Right ventricle myocardium inferior (tissue), 1 donor: ENCODE measurements at regions of chr13 and their contacts with region 1.

Region 1: GRCh38 chr13:112689303-112690165 is at the start of gene ATP11A:
- DNase-seq: peak; percentile 96
- ATAC-seq: peak; percentile 94
- total RNA-seq, gene ATP11A: 89.9 TPM

Region 2: DNA sequence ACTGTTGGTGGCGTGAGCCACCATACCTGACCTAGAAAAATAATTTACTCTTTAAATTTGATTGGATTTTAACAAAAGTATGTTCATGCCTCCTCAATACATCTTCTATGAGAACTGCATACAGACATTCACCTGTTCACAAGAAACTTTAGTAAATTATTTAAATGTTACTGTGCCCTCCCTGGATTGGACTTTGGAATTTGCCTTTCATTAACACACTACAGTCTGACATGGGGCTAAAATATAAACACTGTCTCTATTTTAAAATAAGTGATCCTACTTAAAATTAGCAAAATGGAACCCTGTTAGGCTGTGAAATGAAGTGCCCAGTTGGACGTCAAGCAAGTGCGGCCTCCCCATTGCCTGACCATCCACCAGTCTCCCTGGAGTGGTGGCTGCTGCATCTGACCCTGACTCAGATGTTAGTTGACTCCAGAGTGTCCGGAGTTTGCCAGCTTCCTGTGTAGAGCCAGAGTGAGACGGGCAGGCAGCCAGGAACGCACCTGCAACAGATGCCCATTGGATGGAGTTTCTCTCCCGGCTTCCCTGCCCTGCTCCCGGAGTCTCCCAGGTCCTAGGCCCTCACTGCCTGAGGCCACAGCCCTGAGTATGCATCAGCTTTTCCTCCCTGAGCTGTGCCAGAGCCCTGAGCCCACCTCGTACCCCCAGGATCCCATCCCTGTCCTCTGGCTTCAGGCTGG is 45.6 kb before region 1 on chr13:
- intact Hi-C with region 1: loop called (anchors 5 kb)
- DNase-seq: no peak
- ATAC-seq: no peak

Region 3: DNA sequence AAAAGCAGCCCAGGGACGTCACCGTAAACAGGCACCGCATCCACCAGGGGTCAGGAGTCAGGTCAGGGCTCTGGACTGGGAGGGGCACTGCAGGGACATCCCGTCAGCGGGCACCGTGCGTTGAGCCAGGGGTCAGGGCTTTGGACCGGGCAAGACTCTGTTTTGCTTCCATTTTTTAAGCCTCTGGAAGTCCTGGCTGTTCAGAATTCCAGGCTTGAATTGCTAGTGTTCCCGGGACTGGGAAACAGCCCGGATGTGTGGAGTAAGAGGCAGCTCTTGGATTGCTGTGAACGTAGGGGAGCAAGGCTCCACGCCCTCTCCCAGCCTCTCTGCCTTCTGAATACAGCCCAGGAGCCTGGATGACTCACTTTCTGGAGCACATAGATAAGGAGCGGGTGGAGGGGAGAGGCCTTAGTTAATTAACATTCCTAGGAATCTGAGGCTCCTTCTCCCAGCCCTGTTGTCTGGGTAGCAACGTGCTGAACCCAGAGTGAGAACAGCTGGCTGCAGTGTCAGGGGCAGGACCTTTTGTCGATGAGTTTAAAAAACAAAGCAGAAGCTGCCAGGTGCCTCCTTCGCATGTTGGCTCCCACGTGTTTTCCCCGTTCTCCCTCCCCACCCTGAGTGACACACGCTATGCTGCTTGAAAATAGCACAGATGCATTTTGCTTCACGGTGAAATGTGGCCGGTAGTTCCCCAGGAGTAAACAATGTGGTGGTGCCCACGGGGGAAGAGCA is 22.2 kb after region 1 on chr13:
- intact Hi-C with region 1: loop called (anchors 1 kb)
- DNase-seq: peak; percentile 88
- ATAC-seq: peak; percentile 97

Region 4: DNA sequence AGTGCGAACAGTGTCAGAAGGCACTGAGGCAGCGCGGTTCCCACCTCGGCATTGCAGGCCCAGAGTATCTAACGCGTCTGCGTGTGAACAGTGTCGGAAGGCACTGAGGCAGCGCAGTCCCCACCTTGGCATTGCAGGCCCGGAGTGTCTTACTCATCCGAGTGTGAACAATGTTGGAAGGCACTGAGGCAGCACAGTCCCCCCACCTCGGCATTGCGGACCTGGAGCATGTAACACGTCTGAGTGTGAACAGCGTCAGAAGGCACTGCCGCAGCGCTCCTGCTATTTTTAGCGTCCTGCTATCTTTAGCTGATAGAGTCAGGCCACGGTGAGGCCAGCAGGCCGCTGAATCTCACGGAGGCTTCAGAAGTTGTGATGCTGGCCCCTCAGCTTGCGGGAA is 39.9 kb after region 1 on chr13:
- intact Hi-C with region 1: loop called (anchors 2 kb)
- DNase-seq: no peak
- ATAC-seq: peak; percentile 87

Region 5: DNA sequence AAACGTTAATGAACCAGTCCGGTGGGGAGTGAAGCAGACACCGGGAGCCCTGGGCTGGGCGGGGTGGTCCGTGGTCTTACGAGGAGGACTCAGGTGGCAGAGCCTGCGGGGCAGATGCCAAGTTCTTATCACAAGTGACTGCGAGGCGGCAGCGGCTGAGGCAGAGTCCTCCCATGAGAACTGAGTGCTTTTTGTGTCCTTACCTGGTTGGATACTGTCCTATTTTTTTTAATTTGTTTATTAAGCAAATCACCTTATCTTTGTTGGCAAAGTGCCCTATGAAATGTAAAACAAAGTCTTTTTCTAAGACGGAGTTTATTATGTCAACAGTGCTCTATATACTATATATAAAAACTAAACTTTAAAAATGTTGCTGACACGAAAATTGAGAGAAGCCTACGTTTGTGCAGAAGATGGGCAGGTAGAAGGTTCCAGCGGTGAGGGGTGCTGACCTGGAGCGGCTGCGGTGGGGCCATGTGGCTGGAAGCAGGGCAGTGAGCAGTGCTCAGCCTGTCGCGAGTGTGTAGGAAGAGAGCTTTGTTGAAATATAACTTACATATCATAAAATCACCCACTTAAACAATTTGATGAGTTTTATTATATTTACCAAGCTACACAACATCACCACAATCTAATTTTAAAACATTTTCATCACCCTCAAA is 82.5 kb after region 1 on chr13:
- intact Hi-C with region 1: loop called (anchors 5 kb)
- DNase-seq: no peak
- ATAC-seq: no peak

Region 6: DNA sequence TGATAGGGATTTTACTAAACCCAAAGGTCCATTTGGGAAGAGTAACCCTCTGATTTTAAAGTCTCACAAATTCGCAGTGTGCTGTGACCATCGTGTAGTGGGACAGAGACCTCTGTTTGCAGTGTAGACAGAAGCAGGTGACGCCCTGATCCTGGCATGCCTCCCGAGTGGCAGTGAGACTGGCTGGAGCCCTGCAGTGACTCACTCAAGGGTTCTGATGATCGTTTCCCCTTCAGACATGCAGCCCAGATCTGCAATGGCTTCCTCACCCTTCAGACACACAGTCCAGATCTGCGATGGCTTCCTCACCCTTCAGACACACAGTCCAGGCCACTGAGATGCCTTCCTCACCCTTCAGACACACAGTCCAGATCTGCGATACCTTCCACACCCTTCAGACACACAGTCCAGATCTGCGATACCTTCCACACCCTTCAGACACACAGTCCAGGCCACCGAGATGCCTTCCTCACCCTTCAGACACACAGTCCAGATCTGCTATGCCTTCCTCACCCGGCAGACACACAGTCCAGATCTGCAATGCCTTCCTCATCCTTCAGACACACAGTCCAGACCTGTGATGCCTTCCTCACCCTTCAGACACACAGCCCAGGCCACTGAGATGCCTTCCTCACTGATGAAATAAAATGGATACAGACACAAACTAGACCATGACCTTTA is 125.5 kb after region 1 on chr13:
- intact Hi-C with region 1: loop called (anchors 10 kb)
- DNase-seq: peak; percentile 43
- ATAC-seq: peak; percentile 53

Region 7: DNA sequence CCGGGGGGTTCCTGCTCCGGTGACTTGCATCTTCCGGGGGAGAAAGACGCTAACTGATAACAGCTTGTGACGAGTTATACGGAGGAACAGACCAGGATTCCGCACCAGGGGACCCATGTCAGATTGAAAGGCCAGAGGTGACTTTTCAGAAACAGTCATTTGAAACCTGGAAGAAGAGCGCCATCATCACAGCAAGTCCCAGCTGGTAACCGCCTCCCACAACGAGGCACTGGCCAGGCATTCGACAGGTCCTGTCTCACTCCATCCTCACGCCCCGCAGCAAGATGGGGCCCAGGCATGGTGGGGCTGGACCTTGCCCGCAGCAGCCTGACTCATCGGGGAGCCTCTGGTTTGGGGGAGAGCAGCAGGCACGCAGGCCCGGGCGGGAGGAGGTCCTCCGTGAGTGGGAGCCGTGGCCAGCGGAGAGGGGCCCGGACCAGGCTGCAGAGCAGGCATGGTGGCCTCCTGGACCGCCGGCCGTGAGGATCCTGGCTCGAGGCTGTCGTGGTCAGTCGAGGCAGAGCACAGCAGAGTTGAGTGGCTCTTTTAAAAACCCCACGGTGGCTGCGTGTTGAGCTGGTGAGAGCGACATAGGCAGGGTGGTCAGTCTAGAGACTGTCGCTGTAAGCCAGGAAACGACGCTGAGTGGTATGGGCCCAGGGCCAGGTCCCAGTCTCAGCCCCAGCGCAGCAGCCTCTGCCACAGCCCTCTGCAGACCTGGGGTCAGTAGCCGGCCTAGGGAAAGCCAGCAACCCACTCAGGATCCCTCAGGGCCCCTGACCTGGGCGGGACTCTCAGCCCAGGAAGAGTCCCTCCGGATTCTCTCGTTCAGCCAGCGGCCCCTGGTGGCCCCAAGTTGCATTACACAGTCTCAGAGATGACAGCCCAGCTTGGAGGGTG is 184.6 kb after region 1 on chr13:
- intact Hi-C with region 1: loop called (anchors 1 kb)
- DNase-seq: peak; percentile 92
- ATAC-seq: peak; percentile 84